PC-9 (cell line): ENCODE measurements at regions of chr17 and their contacts with region 1.

Region 1: DNA sequence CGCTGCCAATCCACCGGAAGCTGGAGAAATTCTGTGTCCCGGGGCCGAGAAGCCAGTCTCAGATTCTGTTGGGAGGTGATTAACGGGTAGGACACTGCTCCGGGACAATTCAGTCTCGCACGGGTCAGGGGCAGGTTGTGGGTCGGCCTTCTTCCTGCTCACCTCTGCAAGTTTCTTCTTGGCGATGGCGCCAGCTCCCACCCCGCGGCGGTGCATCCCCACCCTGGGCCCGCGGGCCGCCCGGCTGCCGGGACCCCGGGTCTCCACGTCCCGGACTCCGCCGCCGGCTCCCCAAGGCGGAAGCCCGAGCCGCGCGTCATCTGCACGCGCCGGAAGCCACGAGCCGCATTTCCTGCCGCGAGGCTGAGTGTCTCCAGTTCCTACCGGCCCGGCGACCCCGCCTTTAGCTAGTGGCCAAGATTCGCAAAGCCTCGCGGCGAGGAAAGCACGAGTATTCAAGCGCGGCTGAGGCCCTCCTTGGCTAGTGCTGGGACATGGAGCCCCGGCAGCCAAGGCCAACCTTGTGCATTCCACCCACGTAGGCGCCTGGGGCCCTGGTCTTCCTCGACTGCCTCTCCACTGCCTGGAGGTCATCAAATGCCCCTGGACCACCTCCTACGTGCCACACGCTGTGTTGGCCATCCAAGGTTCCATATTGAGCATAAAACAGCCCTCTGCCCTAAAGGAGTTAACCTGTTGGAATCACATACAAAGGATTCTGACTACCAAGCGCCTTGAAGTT is at the start of gene SNF8:
- DNase-seq: peak; percentile 87 to 88
- H3K4me3 ChIP-seq: peak within 1 kb of the TSS; percentile 67
- H3K27ac ChIP-seq: peak within 1 kb of the TSS; percentile 86
- H3K4me1 ChIP-seq: peaks cover 11% of the 10 kb centered on the region
- H3K27me3 ChIP-seq: no peaks in the 10 kb centered on the region
- CTCF ChIP-seq: no peak
- total RNA-seq, gene SNF8: 103 and 118 TPM in 2 replicates

Region 2: GRCh38 chr17:47188876-47189731 is 1755.6 kb before region 1 on chr17 and contains the start of gene CDC27:
- CTCF ChIA-PET with region 1: no interaction called
- POLR2A ChIA-PET with region 1: interaction called, 14 read pairs
- intact Hi-C with region 1: no loop called
- DNase-seq: peak; percentile 97 to 98
- H3K4me3 ChIP-seq: peak within 1 kb of the TSS; percentile 87
- H3K27ac ChIP-seq: peak within 1 kb of the TSS; percentile 85
- H3K4me1 ChIP-seq: peaks cover 32% of the 10 kb centered on the region
- H3K27me3 ChIP-seq: no peaks in the 10 kb centered on the region
- CTCF ChIP-seq: no peak
- total RNA-seq, gene CDC27: 58.9 and 94.3 TPM in 2 replicates

Region 3: DNA sequence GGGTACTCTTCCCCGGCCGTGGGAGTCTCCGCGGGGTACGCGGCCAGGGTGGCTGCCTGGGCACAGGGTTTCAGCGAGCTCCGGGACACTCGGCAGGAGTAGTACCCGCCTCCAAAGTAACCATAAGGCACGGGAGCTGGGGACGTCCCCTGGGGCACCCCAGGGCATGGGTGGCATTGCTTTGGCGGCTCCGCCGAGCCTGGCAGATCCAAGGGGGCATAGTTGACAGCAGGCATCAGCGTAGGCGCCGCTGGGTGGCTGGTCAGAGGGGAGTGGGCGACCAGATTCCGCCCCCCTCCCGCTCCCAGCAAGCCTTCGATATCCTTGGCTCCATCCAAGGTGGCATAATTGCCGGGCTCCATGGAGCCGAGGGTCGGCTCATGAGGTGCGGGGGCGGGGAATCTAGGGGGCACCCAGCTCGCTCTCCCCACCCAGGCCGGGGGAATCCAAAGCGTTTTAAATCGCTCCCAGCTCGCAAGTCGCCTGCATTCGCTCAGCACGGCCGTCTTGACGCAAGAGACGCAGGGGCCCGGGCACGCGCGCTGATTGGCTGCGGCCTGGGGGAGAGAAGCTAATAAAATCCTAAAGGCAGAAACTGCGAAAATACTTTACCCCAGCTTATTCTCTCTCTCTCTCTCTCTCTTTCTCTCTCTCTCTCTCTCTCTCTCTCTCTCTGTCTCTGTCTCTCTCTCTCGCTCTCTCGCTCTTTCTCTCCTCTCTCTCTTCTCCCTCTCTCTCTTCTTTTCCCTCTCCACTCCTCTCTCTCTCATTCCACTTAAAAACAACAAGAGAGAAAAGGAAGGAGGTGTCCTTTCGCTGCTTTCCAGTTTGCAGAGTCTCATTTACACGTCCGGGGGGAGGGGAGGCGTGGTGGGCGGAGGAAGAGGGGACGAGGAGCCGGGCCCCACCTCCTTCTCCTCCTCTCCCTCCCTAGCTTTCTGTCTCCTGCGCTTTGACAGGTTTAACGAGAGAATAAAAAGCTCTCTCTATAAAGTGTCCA is 216.2 kb before region 1 on chr17 and contains the start of gene HOXB13:
- CTCF ChIA-PET with region 1: no interaction called
- POLR2A ChIA-PET with region 1: no interaction called
- intact Hi-C with region 1: no loop called
- DNase-seq: peak in 1 of 2 experiments; percentile 16
- H3K4me3 ChIP-seq: no peak within 1 kb of the TSS
- H3K27ac ChIP-seq: no peak within 1 kb of the TSS
- H3K4me1 ChIP-seq: no peaks in the 10 kb centered on the region
- H3K27me3 ChIP-seq: peaks cover 93% of the 10 kb centered on the region
- CTCF ChIP-seq: no peak
- total RNA-seq, gene HOXB13: 0.15 TPM in 1 of 2 replicates, not detected in the other